ENCODE measurements at regions of chr5 and their contacts with region 1.

Region 1: DNA sequence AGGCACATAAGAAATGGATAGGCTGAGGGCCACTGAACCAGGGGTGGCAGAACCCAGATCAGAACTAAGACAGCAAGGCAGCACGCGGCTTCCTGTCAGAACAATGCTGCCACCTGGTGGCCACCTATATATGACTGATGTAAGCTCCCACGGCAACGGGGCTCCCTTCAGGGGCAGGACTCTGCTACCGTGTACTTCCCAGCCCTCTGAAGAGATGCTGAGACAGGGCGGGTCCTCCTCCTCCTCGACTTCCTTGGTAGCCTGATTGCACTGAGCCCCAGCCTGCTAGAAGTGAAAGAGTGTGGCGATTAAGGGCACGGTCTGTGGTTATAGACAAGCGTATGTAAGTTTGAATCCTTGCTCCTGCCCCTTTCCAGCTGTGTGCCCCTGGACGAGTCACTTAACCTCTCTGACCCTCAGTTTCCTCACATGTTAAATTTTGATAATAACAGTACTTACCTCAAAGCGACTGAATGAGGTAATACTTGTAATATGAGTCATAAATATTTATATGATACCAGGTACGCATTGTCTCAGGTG is 13.3 kb downstream of the RPS14 start:
- DNase-seq: peak; percentile 97
- H3K4me3 Mint-ChIP-seq: peak overlapping the region; percentile 56
- H3K27ac Mint-ChIP-seq: peak overlapping the region; percentile 75
- H3K4me1 Mint-ChIP-seq: peaks cover 8% of the 10 kb centered on the region
- H3K27me3 Mint-ChIP-seq: no peaks in the 10 kb centered on the region

Region 2: DNA sequence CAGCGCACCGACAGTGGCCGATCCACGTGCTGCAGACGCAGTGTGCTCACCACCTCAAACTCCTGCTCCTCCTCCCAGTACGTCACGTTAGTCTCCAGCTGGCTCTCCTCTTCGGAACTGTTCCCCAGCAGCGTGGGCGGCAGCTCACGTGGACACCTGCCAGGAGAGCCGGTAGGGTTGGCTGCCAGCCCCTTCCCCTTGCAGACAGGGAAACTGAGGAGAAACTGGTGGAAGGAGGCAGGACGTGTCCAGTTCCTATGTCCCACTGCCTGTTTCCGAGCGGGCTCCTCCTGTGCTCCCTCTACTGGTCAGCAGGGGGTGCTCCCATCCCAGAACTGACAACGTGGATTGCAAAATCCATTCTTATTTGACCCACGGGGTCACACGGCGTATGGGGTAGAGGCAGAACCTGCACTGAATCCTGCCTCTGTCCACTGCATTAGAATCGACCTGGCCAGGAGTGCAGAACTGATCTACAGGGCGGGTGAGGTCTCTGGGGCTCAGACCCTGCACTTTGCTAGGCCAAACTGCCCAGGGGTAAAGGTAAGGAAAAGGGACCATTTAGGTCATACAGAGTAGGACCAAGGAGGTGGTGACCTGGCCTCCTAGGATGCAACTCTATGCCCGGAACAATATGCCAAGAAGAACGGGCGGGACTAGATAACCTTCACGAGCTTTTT is 306.3 kb before region 1 on chr5:
- intact Hi-C with region 1: loop called (anchors 1 kb)
- DNase-seq: peak; percentile 86
- H3K4me3 Mint-ChIP-seq: no peak overlapping the region
- H3K27ac Mint-ChIP-seq: no peak overlapping the region
- H3K4me1 Mint-ChIP-seq: peaks cover 2% of the 10 kb centered on the region
- H3K27me3 Mint-ChIP-seq: no peaks in the 10 kb centered on the region

Region 3: DNA sequence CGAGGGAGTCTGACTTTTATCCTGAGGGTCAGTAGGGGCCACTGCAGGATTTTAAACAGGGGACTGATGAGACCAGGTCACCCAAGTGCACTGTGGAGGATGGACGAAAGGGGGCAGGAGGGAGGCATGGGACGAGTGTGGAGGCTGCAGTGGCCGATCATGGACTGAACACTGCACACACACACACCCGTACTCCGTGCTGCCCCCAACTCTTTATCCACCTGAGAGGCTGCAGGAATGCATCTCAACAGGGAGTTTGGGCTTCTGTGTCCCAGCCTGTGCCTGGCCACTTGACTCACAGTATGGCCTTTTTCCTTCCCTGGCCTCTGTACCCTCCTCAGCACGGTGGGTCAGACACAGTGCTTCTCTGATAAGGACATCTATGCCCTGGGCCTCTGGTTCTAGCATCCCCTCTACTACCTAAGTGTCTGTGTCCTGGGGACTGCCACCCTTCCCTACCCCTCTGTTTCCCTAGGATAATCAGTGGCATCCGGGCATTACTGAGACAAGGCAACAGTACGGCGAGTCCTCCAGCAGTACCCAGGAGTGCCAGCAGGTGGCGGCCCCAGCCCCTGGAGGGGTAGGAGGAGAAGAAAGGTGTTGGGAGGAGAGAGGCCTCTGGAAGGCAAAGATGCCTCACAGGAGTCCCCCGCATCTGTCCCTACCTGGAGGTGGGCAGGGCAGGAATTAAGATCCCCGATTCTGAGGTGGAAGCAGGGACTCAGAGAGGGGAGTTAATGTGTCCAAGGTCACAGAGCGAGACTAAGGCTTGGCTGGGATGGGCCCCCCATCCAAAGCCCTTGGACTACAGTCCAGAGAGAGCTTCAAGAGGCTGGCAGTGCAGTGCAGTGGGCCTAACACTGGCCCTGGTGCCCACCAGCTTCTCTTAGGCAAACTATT is 274.7 kb before region 1 on chr5:
- intact Hi-C with region 1: loop called (anchors 5 kb)
- DNase-seq: peak; percentile 94
- H3K4me3 Mint-ChIP-seq: no peak overlapping the region
- H3K27ac Mint-ChIP-seq: no peak overlapping the region
- H3K4me1 Mint-ChIP-seq: peaks cover 3% of the 10 kb centered on the region
- H3K27me3 Mint-ChIP-seq: peaks cover 30% of the 10 kb centered on the region

Region 4: GRCh38 chr5:150278916-150279315 is 157.3 kb before region 1 on chr5:
- intact Hi-C with region 1: no loop called
- DNase-seq: no peak
- H3K4me3 Mint-ChIP-seq: no peak overlapping the region
- H3K27ac Mint-ChIP-seq: no peak overlapping the region
- H3K4me1 Mint-ChIP-seq: no peaks in the 10 kb centered on the region
- H3K27me3 Mint-ChIP-seq: peaks cover 16% of the 10 kb centered on the region

Region 5: GRCh38 chr5:150350524-150351344 is 85.5 kb before region 1 on chr5:
- intact Hi-C with region 1: no loop called
- DNase-seq: peak; percentile 85
- H3K4me3 Mint-ChIP-seq: no peak overlapping the region
- H3K27ac Mint-ChIP-seq: peak overlapping the region; percentile 39
- H3K4me1 Mint-ChIP-seq: peaks cover 11% of the 10 kb centered on the region
- H3K27me3 Mint-ChIP-seq: peaks cover 11% of the 10 kb centered on the region

Region 6: GRCh38 chr5:150398722-150399523 is 37.3 kb before region 1 on chr5:
- intact Hi-C with region 1: loop called (anchors 5 kb)
- DNase-seq: peak; percentile 70
- H3K4me3 Mint-ChIP-seq: no peak overlapping the region
- H3K27ac Mint-ChIP-seq: no peak overlapping the region
- H3K4me1 Mint-ChIP-seq: peaks cover 2% of the 10 kb centered on the region
- H3K27me3 Mint-ChIP-seq: no peaks in the 10 kb centered on the region